Ascending aorta (tissue), 2 donors: ENCODE measurements at regions of chr3 and their contacts with region 1.

Region 1: GRCh38 chr3:149936812-149937233 is 33.9 kb downstream of the PFN2 start:
- DNase-seq: peak in 1 of 2 donors; percentile 68
- H3K4me3 ChIP-seq: peak overlapping the region in 1 of 2 donors; percentile 28
- H3K27ac ChIP-seq: peak overlapping the region; percentile 0 to 47
- H3K4me1 ChIP-seq: peaks cover 0 to 16% of the 10 kb centered on the region in 2 donors
- H3K27me3 ChIP-seq: no peaks in the 10 kb centered on the region
- CTCF ChIP-seq: peak; percentile 52 to 66 (median 61)

Region 2: DNA sequence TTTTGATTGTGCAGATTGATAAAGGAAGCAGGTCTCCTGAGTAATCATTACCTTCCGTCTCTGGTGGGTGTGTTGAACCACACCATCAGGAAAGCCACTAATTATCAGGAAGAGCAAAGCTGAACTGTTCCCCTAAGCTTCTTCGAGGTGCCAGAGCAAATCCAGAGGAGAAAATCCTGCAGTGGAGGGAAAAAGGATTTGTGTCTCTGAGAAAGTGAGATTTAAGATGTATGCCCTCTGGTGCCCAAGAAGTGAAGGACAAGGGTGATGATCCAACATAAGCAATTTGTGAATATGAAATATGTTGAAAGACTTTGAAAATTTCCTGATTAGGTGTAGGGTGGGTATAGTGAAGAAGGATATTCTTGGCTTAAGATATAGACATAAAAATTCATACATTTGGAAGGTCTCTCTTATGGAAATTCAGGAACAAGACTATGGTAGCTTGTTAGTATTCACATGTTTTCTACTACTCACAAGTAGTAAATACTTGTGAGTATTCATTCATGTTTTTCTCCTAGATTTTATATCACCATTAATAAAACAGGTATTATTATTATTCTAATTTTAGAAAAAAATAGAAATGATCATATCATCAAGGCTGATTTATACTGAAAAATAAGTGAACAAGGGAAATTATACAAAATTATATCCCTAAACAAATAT is 219.3 kb before region 1 on chr3:
- intact Hi-C with region 1: no loop called
- DNase-seq: peak in 1 of 2 donors; percentile 83
- H3K4me3 ChIP-seq: peak overlapping the region in 1 of 2 donors; percentile 16
- H3K27ac ChIP-seq: no peak overlapping the region
- H3K4me1 ChIP-seq: peaks cover 2 to 3% of the 10 kb centered on the region in 2 donors
- H3K27me3 ChIP-seq: no peaks in the 10 kb centered on the region
- CTCF ChIP-seq: peak; percentile 51 to 73 (median 69)

Region 3: DNA sequence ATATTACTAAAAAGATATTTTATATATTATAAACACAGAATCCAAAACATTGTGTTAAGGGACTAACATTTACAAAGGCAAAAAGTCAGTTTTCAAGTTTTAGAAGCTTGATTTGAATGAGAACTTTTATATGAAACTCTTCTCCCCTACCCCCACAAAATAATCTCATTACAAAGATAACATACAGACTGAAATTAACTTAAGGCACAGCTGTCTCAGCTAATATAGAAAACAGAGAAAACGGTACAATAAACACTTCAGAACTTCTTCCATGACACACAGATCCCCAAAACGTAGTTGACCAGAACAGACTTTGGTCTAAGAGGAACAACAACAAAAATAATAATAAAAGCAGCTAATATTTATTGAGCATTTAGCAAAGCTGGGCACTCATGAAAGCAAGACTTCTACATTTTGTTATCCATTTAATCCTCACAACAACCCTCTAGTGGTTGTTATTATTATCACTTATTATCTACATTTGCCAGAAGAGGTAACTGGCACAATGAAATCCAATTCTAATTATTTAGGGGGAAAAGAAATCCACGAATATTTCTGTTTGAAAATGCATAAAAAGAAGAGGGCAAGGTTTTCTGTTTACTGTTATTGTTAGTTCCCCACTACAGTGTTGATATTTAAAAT is 34.2 kb before region 1 on chr3:
- intact Hi-C with region 1: no loop called
- DNase-seq: no peak
- H3K4me3 ChIP-seq: no peak overlapping the region
- H3K27ac ChIP-seq: no peak overlapping the region
- H3K4me1 ChIP-seq: peaks cover 3 to 9% of the 10 kb centered on the region in 2 donors
- H3K27me3 ChIP-seq: no peaks in the 10 kb centered on the region
- CTCF ChIP-seq: peak in 1 of 3 experiments; percentile 21

Region 4: GRCh38 chr3:150124142-150124541 is 187.3 kb after region 1 on chr3:
- intact Hi-C with region 1: no loop called
- DNase-seq: no peak
- H3K4me3 ChIP-seq: no peak overlapping the region
- H3K27ac ChIP-seq: no peak overlapping the region
- H3K4me1 ChIP-seq: no peaks in the 10 kb centered on the region
- H3K27me3 ChIP-seq: no peaks in the 10 kb centered on the region
- CTCF ChIP-seq: no peak

Region 5: GRCh38 chr3:150183678-150184425 is 247.0 kb after region 1 on chr3:
- intact Hi-C with region 1: loop called (anchors 10 kb)
- DNase-seq: peak in 1 of 2 donors; percentile 80
- H3K4me3 ChIP-seq: peak overlapping the region; percentile 48 to 60
- H3K27ac ChIP-seq: peak overlapping the region; percentile 57 to 69
- H3K4me1 ChIP-seq: peaks cover 0 to 2% of the 10 kb centered on the region in 2 donors
- H3K27me3 ChIP-seq: no peaks in the 10 kb centered on the region
- CTCF ChIP-seq: peak; percentile 46 to 79 (median 61)